Left colon (tissue), 2 donors: ENCODE measurements at regions of chr4 and their contacts with region 1.

Region 1: GRCh38 chr4:103008875-103009729 is 10.4 kb downstream of the SLC9B1 start:
- DNase-seq: no peak
- ATAC-seq: peak; percentile 72

Region 2: DNA sequence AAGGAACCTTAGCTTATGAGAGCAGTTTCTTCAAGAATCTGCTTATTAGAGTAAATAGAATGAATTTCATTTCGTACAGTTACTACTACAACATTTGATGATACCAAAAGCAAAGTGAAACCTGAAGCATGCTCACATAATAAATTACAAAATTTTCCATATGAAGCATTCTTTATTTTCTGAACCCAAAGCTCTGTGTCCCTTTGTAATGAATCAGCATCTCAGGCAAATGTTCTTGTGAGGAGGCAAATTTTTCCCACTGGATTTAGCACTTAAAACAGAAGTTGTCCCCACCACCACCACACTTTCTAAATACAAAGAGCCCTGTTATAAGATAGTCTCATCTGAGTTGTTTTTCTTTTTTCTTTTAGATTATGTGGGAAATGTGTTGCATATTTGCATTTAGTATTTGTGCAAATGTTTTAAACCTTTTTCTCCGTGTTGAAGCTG is 578.6 kb before region 1 on chr4:
- intact Hi-C with region 1: loop called in 1 of 2 experiments (anchors 5 kb)
- DNase-seq: no peak
- ATAC-seq: peak; percentile 19